GM12878 (cell line): ENCODE measurements at regions of chr2 and their contacts with region 1.

Region 1: DNA sequence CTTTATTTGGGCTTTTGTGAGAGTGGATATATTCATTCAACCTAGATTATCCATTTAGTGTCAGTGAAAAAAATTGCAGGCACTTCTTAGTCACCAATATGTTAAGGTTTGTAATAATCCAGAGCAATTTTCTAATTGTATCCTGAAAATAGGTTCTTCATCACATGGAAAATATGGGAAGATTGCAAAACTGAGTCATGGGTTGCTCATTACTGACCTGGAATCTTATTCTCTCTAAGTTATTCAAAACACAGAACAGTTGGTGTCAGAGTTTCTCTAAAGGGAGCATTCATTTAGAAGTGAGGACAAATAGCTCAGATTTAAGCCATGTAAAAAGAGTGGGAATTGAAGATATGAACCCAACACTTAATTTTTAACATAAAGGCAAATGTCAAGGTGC is 181.3 kb downstream of the IKZF2 start:
- DNase-seq: no peak
- ATAC-seq: no peak
- H3K4me3 ChIP-seq: no peak overlapping the region
- H3K27ac ChIP-seq: no peak overlapping the region
- H3K4me1 ChIP-seq: no peaks in the 10 kb centered on the region
- H3K27me3 ChIP-seq: no peaks in the 10 kb centered on the region
- CTCF ChIP-seq: no peak
- EP300 ChIP-seq: no peak
- POLR2A ChIP-seq: no peak
- RAD21 ChIP-seq: no peak

Region 2: DNA sequence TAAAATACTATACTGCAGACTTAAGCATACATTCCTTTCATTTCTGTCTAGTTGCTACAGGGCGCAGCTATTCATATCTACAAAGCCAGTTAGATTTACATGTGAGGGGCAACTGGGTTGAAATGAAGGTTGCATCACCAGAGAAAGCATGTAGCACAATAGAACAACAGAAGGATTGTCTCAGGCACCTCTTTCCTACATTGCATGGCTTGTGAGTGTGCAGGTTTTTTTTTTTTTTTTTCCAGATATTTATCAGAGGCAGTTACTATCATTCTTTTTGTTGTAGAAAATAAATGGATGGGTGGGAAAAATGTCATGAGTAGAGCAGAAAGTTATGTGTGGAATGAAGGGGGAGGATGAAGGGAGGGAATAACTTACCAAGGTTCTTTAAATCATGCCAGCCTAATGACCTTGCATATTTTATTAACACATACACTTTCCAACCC is 518.3 kb before region 1 on chr2:
- CTCF ChIA-PET with region 1: no interaction called
- POLR2A ChIA-PET with region 1: no interaction called
- RAD21 ChIA-PET with region 1: no interaction called
- SMC1A ChIA-PET with region 1: no interaction called
- in situ Hi-C with region 1: no loop called
- intact Hi-C with region 1: no loop called
- DNase-seq: no peak
- ATAC-seq: no peak
- H3K4me3 ChIP-seq: no peak overlapping the region
- H3K27ac ChIP-seq: no peak overlapping the region
- H3K4me1 ChIP-seq: no peaks in the 10 kb centered on the region
- H3K27me3 ChIP-seq: no peaks in the 10 kb centered on the region
- CTCF ChIP-seq: no peak
- EP300 ChIP-seq: no peak
- POLR2A ChIP-seq: no peak
- RAD21 ChIP-seq: no peak

Region 3: DNA sequence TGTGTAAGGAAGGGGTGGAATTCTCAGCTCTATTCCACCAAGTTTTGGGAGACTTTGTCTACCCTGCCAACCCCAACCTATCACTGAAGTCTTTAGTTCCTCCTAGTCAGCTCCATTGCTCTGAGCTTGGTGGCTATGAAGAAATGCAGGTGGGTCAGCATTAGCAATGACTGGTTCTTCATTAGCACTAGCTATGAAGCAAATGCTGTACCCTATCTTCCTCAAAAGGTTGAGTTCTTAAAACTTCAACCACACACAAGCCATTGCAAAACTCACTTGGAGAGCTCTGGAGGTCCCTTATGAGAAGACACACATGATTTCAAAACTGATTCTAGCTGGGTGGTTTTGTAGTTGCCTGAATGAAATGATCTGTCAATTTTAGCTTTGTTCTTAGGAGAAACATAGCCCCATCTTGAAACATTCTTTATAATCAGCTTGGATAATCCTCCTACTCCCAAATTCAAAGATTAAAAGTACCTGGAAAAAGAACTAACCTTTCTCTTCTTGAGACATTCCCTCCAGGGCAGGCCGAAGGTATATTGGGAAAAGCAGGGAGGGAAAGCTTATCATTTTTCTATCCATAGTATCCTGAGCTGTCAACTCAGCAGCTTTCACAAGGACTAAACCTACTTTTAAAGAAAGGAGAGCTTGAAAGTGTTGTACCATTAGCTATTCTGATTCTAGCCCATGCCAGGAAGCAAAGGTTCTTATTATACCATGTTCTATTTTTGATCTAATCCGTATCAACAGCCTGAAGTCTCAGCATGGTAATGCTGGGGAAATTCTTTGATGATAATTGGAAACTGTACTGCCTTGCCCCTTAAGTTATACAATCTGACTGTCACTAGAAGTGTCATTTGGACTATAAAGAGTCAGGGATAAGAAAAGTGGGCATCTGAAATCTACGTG is 12.3 kb before region 1 on chr2:
- CTCF ChIA-PET with region 1: interaction called, 4 read pairs
- POLR2A ChIA-PET with region 1: no interaction called
- RAD21 ChIA-PET with region 1: no interaction called
- SMC1A ChIA-PET with region 1: interaction called, 14 read pairs
- in situ Hi-C with region 1: no loop called
- intact Hi-C with region 1: no loop called
- DNase-seq: no peak
- ATAC-seq: no peak
- H3K4me3 ChIP-seq: no peak overlapping the region
- H3K27ac ChIP-seq: no peak overlapping the region
- H3K4me1 ChIP-seq: peaks cover 5% of the 10 kb centered on the region; the same call in 1 of the 2 replicates
- H3K27me3 ChIP-seq: no peaks in the 10 kb centered on the region
- CTCF ChIP-seq: no peak
- EP300 ChIP-seq: no peak
- POLR2A ChIP-seq: no peak
- RAD21 ChIP-seq: no peak